ENCODE measurements at regions of chr16 and their contacts with region 1.

Region 1: DNA sequence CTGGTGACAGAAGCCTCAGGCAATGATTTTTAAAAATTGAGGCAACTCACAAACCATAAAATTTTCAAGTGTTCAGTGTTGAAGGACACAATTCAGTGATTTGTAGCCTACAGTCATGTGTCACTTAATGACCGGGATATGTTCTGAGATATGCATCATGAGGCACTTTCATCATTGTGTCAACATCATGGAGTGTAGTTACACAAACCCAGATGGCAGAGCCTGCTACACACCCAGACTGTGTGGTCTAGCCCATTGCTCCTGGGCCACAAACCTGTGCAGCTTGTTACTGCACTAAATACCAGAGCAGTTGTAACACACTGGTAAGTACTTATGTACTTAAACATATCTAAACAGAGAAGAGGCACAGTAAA is 1.6 kb downstream of the PRSS41 start:
- DNase-seq: no peak
- H3K4me3 ChIP-seq: no peak overlapping the region
- H3K27ac ChIP-seq: no peak overlapping the region
- H3K4me1 ChIP-seq: no peaks in the 10 kb centered on the region
- CTCF ChIP-seq: no peak

Region 2: GRCh38 chr16:2770057-2770951 is 29.5 kb before region 1 on chr16:
- CTCF ChIA-PET with region 1: no interaction called
- POLR2A ChIA-PET with region 1: no interaction called
- intact Hi-C with region 1: no loop called
- DNase-seq: no peak
- H3K4me3 ChIP-seq: no peak overlapping the region
- H3K27ac ChIP-seq: no peak overlapping the region
- H3K4me1 ChIP-seq: peaks cover 2% of the 10 kb centered on the region
- CTCF ChIP-seq: peak; percentile 54

Region 3: DNA sequence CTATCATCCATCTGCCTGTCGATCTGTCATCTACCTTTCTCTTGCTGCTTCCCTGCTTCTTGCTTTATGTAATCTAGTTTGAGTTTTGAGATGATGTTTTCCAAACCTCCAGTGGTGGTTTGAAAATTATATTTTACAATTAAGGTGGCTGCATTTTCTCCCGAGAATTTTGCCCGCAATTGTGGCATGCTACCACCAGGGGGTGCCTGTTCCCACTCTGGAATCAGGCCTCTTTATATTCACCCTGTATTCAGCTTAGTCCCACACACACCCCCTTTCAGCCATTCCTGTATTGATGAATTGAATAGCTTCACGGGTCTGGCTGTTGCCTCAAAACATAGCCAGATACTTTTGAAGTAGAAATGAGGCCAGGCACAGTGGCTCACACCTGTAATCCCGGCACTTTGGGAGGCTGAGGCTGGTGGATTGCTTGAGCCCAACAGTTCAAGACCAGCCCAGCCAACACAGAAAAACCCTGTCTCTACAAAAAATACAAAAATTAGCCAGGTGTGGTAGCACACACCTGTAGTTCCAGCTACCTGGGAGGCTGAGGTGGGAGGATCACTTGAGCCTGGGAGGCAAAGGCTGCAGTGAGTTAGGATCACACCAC is 55.0 kb after region 1 on chr16:
- CTCF ChIA-PET with region 1: no interaction called
- POLR2A ChIA-PET with region 1: no interaction called
- intact Hi-C with region 1: loop called (anchors 10 kb)
- DNase-seq: peak; percentile 14
- H3K4me3 ChIP-seq: no peak overlapping the region
- H3K27ac ChIP-seq: no peak overlapping the region
- H3K4me1 ChIP-seq: no peaks in the 10 kb centered on the region
- CTCF ChIP-seq: peak; percentile 87

Measured in OCI-LY7 (cell line).